Activated naive CD8-positive, alpha-beta T cell treated with anti-CD3 and anti-CD28 coated beads, Interleukin-2, amount 10 ng/mL, durations not matched to agents 7 days and 5 days (primary cell): ENCODE measurements at regions of chr11 and their contacts with region 1.

Region 1: DNA sequence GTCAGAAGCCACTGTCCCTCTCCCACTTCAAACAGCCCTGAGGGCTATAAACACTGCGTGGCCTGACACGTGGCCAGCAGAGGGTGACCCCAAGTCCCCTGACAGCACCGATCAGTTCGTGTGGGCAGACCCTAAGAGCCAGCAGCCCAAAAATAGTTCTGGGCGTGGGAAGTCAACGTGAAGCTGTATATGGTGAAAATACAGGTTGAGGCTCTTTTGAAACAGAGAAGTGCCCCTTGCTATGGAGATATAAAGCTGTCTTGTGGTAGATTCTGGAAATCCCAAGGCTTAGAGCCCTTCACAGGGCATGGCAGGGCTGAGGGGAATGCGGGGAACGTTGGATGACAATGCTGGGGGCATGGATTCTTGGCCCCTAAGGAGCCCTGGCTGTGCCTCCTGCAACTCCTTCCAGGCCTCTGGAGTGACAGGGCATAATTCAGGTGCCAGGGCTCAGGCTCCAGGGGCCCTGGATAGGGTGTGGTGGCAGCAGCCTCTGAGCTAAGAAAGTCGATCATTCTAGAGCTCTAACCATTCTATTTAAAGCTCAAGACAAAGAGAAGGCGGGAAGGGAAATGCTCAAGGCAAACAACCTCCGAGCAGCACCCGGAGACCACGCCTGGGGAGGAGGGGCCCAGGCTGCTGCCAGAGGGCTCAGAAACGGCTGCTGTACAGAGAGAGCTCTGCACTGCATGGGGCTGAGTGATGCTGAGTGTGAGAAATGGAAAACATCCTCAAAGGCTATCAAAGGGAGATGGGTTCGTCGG is 60.4 kb upstream of the CD5 start:
- DNase-seq: peak; percentile 82
- ATAC-seq: peak; percentile 100
- H3K4me3 Mint-ChIP-seq: peak overlapping the region; percentile 75
- H3K27ac Mint-ChIP-seq: peak overlapping the region; percentile 96
- H3K4me1 Mint-ChIP-seq: peaks cover 44% of the 10 kb centered on the region
- H3K27me3 Mint-ChIP-seq: no peaks in the 10 kb centered on the region

Region 2: GRCh38 chr11:60978546-60979380 is 63.2 kb before region 1 on chr11:
- POLR2A ChIA-PET with region 1: interaction called, 10 read pairs
- DNase-seq: peak; percentile 50
- ATAC-seq: peak; percentile 64
- H3K4me3 Mint-ChIP-seq: peak overlapping the region; percentile 76
- H3K27ac Mint-ChIP-seq: peak overlapping the region; percentile 91
- H3K4me1 Mint-ChIP-seq: peaks cover 73% of the 10 kb centered on the region
- H3K27me3 Mint-ChIP-seq: no peaks in the 10 kb centered on the region

Region 3: GRCh38 chr11:61021661-61022212 is 20.2 kb before region 1 on chr11:
- POLR2A ChIA-PET with region 1: interaction called, 80 read pairs
- DNase-seq: peak; percentile 80
- ATAC-seq: peak; percentile 51
- H3K4me3 Mint-ChIP-seq: peak overlapping the region; percentile 70
- H3K27ac Mint-ChIP-seq: peak overlapping the region; percentile 90
- H3K4me1 Mint-ChIP-seq: peaks cover 67% of the 10 kb centered on the region
- H3K27me3 Mint-ChIP-seq: no peaks in the 10 kb centered on the region

Region 4: GRCh38 chr11:61052182-61052972 is 10.4 kb after region 1 on chr11:
- POLR2A ChIA-PET with region 1: interaction called, 20 read pairs
- DNase-seq: peak; percentile 22
- ATAC-seq: no peak
- H3K4me3 Mint-ChIP-seq: no peak overlapping the region
- H3K27ac Mint-ChIP-seq: peak overlapping the region; percentile 67
- H3K4me1 Mint-ChIP-seq: peaks cover 47% of the 10 kb centered on the region
- H3K27me3 Mint-ChIP-seq: no peaks in the 10 kb centered on the region

Region 5: DNA sequence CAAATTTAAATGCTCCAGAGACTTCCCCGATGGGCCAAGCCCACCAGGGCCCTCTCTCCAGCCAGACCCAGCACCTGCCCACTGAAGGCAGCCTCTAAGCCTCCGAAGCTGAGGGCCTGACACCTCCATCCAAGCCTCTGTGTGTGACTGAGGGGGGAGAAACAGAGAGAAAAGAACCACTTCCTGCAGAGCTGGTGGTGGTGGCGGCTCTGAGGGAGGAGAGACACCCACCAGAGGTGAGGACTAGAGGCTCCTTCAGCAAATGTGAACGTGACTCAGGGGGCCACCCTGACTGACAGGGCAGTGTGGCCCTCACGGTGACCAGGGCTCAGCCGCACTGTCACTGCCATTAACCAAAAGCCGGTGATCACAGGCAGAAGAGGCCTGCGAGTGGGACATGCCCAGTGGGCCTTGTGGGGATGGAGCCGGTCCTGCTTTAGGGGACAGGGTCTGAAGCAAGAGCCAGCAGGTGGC is 29.3 kb after region 1 on chr11:
- POLR2A ChIA-PET with region 1: interaction called, 24 read pairs
- DNase-seq: peak; percentile 78
- ATAC-seq: peak; percentile 97
- H3K4me3 Mint-ChIP-seq: peak overlapping the region; percentile 78
- H3K27ac Mint-ChIP-seq: peak overlapping the region; percentile 94
- H3K4me1 Mint-ChIP-seq: peaks cover 71% of the 10 kb centered on the region
- H3K27me3 Mint-ChIP-seq: no peaks in the 10 kb centered on the region

Region 6: DNA sequence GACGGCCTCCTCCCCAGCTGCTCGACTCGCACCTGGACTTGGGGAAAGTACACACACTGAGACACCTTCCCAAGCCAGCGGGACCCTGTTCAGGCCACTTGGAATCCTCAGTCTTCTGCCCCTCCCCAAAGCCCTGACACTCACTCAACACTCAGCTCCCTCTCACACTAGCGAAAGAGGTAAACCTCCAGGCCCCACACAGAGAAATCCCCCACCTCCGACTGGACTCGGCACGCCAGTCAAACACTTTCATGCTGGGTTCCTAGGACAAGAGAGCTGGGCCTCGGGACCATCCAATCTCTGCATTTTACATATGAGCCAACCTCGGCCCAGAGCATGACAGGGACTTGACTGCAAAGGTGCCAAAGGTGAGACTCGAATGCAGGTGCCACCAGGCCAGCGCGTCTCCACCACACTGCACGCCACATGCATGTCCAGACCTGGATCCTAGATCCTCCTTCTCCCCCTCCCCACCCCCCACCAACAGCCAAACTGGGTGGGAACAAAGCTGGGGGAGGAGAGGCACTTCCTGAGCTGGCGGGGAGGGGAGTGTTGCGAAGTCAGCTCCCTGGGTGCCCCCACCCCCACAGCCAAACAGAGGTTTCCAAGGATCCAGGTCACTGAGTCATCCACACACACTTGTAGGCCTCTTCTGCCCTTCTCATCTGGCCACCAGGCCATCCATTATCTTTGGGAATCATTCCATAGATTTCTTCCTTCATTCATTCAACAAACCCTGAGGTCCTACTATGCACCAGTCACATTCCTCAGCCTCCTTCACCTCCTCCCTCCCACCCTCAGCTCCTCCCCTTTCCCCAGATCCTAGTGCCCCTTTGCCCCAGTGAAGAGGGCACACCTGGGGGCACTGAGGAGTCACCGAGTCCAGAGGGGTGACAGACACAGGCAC is 49.7 kb after region 1 on chr11:
- POLR2A ChIA-PET with region 1: interaction called, 12 read pairs
- DNase-seq: peak; percentile 49
- ATAC-seq: peak; percentile 46
- H3K4me3 Mint-ChIP-seq: peak overlapping the region; percentile 84
- H3K27ac Mint-ChIP-seq: peak overlapping the region; percentile 94
- H3K4me1 Mint-ChIP-seq: peaks cover 62% of the 10 kb centered on the region
- H3K27me3 Mint-ChIP-seq: no peaks in the 10 kb centered on the region

Region 7: GRCh38 chr11:61111786-61112517 is 70.0 kb after region 1 on chr11:
- POLR2A ChIA-PET with region 1: interaction called, 10 read pairs
- DNase-seq: peak; percentile 54
- ATAC-seq: peak; percentile 97
- H3K4me3 Mint-ChIP-seq: peak overlapping the region; percentile 88
- H3K27ac Mint-ChIP-seq: peak overlapping the region; percentile 97
- H3K4me1 Mint-ChIP-seq: peaks cover 93% of the 10 kb centered on the region
- H3K27me3 Mint-ChIP-seq: no peaks in the 10 kb centered on the region

Region 8: DNA sequence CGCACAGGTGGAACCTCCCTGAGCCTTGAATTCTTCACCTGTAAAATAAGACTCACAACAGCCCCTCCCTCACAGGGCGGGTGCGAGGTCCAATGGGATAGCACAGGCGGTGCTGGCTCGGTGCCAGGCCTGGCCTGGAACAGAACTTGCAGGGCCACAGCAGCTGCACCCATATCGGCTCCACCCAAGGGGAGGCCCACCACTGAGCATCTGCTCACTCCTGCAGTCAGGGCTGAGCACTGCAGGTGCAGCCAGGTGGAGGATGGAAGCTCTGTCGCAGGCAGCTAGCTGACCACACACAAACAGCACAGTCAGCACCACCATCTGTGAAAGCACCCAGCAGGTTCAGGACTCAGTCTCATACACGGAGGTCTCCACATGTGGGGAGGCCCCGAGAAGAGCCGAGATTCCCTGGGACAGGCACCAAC is 99.7 kb after region 1 on chr11:
- POLR2A ChIA-PET with region 1: no interaction called
- DNase-seq: no peak
- ATAC-seq: no peak
- H3K4me3 Mint-ChIP-seq: no peak overlapping the region
- H3K27ac Mint-ChIP-seq: no peak overlapping the region
- H3K4me1 Mint-ChIP-seq: peaks cover 10% of the 10 kb centered on the region
- H3K27me3 Mint-ChIP-seq: no peaks in the 10 kb centered on the region